PC-3 (cell line): ENCODE measurements at regions of chr15 and their contacts with region 1.

Region 1: GRCh38 chr15:85073556-85074194 is 92.0 kb downstream of the PDE8A start:
- DNase-seq: peak; percentile 22
- ATAC-seq: peak; percentile 84
- H3K4me3 ChIP-seq: no peak overlapping the region
- H3K27ac ChIP-seq: no peak overlapping the region
- H3K4me1 ChIP-seq: no peaks in the 10 kb centered on the region
- H3K27me3 ChIP-seq: no peaks in the 10 kb centered on the region
- CTCF ChIP-seq: no peak

Region 2: DNA sequence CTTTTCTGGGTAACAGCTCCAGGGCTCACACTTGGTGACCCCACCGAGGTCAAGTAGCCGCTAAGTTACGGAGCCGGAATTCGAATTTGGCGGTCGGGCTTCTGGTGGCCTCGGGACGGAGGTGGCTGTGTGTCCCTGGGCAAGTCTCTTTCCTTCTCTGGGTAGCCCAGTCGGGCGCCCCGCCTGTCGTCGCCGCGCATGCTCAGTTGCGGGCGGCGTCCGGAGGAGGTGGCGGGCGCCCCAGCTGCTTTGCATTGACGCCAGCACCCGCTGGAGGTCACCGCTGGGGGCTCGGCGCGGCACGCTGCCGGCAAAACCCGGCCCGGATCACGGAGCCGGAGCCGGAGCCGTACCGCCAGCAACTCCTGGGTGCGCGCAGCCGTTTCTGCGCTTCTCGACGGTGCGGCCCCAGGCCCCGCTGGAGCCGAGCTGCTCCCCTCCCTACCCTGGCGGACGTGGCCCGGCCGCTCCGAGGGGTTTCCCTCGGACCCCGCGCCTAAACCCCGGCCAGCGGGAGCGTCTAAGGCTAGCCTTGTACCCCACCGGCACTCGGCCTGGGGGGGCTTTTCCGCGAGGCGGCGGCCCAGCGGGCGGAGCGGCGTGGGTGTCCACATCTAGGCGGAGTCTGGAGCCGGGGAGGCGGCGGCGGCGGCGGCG is 92.5 kb before region 1 on chr15:
- CTCF ChIA-PET with region 1: no interaction called
- POLR2A ChIA-PET with region 1: interaction called, 10 read pairs
- intact Hi-C with region 1: no loop called
- DNase-seq: peak; percentile 97
- ATAC-seq: peak; percentile 69
- H3K4me3 ChIP-seq: peak overlapping the region; percentile 92
- H3K27ac ChIP-seq: peak overlapping the region; percentile 87
- H3K4me1 ChIP-seq: peaks cover 26% of the 10 kb centered on the region
- H3K27me3 ChIP-seq: no peaks in the 10 kb centered on the region
- CTCF ChIP-seq: no peak